ENCODE measurements at regions of chr7 and their contacts with region 1.

Region 1: GRCh38 chr7:29915481-29916215 is 74.0 kb downstream of the SCRN1 start:
- DNase-seq: no peak
- ATAC-seq: no peak
- H3K4me3 ChIP-seq: no peak overlapping the region
- H3K27ac ChIP-seq: no peak overlapping the region
- H3K4me1 ChIP-seq: no peaks in the 10 kb centered on the region
- H3K27me3 ChIP-seq: no peaks in the 10 kb centered on the region

Region 2: GRCh38 chr7:29639881-29640595 is 275.6 kb before region 1 on chr7:
- intact Hi-C with region 1: loop called (anchors 10 kb)
- DNase-seq: no peak
- ATAC-seq: no peak
- H3K4me3 ChIP-seq: no peak overlapping the region
- H3K27ac ChIP-seq: no peak overlapping the region
- H3K4me1 ChIP-seq: no peaks in the 10 kb centered on the region
- H3K27me3 ChIP-seq: no peaks in the 10 kb centered on the region

Region 3: GRCh38 chr7:29748286-29749108 is 167.2 kb before region 1 on chr7:
- intact Hi-C with region 1: loop called in 2 of 4 experiments (anchors 5 to 10 kb)
- DNase-seq: no peak
- ATAC-seq: peak; percentile 59 to 87
- H3K4me3 ChIP-seq: no peak overlapping the region
- H3K27ac ChIP-seq: no peak overlapping the region
- H3K4me1 ChIP-seq: no peaks in the 10 kb centered on the region
- H3K27me3 ChIP-seq: no peaks in the 10 kb centered on the region

Region 4: DNA sequence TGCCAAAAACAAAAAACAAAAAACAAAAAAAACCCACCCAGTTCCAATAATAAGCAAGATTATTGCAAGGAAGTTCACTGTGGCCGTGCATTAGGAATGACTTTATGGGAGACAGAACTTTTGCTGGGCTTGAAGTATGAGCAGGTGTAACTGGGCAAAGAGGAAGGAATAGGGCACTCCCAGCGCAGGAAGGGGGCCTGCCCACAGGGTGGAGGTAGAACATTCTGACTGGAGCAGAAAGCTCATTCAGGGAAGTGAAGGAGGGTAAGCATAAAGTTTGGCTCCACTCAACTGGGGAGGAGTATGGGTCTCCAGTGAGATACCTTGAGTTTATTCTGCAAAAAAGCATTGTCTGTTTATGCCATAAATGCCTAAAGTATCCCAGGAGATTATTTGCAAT is 151.4 kb before region 1 on chr7:
- intact Hi-C with region 1: loop called in 2 of 4 experiments (anchors 10 kb)
- DNase-seq: no peak
- ATAC-seq: no peak
- H3K4me3 ChIP-seq: no peak overlapping the region
- H3K27ac ChIP-seq: no peak overlapping the region
- H3K4me1 ChIP-seq: no peaks in the 10 kb centered on the region
- H3K27me3 ChIP-seq: no peaks in the 10 kb centered on the region

Region 5: DNA sequence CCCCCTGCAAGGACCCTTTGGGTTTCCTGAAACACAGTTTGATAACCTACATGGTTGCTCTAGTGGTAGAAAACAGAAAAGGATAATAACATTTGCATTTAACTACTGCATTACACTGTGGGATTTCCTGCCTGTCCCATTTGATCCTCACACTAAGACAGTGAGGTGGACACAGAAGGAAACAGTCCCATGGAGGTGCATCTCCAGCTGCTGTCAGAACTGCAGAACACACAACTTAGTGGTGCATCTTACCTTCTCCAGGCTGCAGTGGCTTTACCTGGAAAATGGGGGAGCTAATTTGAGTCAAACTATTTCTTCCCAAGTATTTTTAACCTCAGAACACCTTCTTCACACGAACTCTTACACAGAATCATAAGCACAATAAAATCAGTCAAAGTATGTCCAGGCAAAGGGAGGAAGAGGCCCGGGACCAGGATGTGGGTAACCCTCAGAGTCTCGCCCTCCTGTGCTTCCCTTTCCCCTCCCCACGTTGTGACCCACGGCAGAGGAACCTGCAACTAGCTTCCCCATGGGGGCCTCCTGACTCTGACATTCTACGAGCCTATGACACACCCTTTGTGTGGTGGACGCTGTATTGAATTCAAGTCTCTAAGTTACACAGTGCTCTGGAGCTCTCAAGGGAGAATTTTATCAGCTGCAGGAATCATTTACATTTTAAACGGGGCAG is 40.3 kb after region 1 on chr7:
- intact Hi-C with region 1: no loop called
- DNase-seq: no peak
- ATAC-seq: no peak
- H3K4me3 ChIP-seq: no peak overlapping the region
- H3K27ac ChIP-seq: no peak overlapping the region
- H3K4me1 ChIP-seq: no peaks in the 10 kb centered on the region
- H3K27me3 ChIP-seq: no peaks in the 10 kb centered on the region

Measured in right cardiac atrium (tissue), 5 donors.